AG04450 (cell line): ENCODE measurements at regions of chr4 and their contacts with region 1.

Region 1: DNA sequence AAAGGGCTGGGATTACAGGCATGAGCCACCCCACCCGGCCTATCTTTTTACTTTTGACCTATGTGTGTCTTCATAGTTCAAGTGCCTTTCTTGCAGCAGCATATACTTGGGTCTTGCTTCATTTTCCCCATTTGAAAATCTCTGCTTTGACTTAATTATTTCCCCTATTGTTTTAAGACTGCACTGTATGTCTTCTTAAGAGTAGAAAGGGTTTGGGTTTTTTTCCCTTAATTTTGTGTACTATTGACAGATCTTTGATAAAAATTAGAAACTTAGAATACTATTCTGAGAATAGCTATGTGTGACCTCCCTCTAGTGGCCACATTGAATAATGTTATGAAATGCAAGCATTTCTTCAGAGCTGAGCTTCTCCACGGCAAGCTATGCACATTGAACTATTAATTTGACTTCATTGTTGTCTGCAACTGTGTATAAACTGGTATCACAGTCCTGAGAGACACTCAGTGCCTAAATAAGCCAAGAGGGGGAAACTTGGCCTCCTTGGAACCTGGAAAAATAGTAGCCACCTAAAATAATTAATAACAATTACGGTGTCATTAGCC is 8.7 kb upstream of the SLC25A4 start:
- DNase-seq: peak; percentile 30
- H3K4me3 ChIP-seq: no peak overlapping the region
- H3K27ac ChIP-seq: no peak overlapping the region
- H3K27me3 ChIP-seq: peaks cover 3% of the 10 kb centered on the region
- CTCF ChIP-seq: peak; percentile 63

Region 2: DNA sequence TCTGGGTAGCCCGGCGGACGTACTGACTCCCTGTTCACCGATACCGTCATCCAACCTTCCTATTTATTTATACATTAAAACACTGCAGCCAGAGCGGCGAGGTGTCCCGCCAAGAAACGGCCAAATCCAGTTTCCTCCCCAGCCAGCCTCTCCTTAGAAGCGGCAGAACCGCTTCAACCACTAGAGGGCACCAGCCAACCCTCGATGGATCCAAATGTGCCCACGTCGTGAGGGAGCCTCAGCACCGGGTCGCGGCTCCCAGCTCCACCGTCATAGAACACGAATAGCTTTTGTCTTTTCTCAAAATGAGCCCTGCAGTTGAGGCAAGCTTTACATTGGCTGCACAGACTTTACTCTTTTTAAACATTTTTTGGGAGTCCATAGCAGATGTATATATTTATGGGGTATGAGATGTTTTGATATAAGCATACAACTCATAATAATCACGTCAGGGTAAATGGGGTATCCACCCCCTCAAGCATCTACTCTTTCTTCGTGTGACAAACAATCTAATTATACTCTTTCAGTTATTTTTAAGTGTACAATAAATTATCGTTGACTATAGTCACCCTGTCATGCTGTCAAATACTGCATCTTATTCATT is 129.1 kb before region 1 on chr4:
- CTCF ChIA-PET with region 1: interaction called, 16 read pairs
- POLR2A ChIA-PET with region 1: no interaction called
- DNase-seq: peak; percentile 36
- H3K4me3 ChIP-seq: peak overlapping the region; percentile 39; the same call in 1 of the 2 replicates
- H3K27ac ChIP-seq: no peak overlapping the region
- H3K27me3 ChIP-seq: peaks cover 14% of the 10 kb centered on the region
- CTCF ChIP-seq: peak; percentile 96

Region 3: DNA sequence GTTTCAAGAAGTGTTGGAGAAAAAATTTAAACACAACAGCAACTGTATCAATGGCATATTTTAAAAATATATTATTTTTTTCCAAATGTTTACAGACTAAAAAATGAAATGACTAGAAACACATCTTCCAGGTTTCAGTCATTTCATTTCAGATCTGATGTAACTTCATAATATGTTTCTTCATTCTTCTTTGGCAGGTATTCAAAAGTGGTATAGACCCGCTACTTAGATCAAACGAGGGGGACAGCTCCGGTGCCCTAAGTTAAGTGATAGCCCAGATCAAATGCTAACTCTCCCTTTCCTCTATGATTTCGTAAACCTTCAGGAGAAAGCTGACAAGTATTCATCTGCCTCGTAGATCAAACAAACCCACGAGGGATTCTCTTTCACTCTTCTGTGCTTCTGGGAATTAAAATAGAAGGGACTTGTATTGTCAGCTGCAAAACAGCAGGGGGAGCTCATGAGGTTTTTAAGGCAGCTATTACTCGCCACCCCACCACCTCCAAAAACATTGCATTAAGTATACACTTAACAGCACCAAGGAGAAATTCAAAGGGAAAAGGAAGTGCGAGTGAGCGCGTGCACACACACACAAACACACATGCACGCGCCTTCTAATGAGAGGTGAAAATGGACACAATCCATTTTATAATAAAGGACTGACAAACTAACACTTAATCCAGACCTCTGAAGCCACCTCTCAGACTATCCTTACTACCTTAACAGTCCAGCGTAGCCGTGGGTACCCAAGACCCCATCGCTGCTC is 94.7 kb before region 1 on chr4:
- CTCF ChIA-PET with region 1: interaction called, 137 read pairs
- POLR2A ChIA-PET with region 1: no interaction called
- DNase-seq: peak; percentile 37
- H3K4me3 ChIP-seq: peak overlapping the region; percentile 38
- H3K27ac ChIP-seq: no peak overlapping the region
- H3K27me3 ChIP-seq: peaks cover 7% of the 10 kb centered on the region
- CTCF ChIP-seq: peak; percentile 90

Region 4: DNA sequence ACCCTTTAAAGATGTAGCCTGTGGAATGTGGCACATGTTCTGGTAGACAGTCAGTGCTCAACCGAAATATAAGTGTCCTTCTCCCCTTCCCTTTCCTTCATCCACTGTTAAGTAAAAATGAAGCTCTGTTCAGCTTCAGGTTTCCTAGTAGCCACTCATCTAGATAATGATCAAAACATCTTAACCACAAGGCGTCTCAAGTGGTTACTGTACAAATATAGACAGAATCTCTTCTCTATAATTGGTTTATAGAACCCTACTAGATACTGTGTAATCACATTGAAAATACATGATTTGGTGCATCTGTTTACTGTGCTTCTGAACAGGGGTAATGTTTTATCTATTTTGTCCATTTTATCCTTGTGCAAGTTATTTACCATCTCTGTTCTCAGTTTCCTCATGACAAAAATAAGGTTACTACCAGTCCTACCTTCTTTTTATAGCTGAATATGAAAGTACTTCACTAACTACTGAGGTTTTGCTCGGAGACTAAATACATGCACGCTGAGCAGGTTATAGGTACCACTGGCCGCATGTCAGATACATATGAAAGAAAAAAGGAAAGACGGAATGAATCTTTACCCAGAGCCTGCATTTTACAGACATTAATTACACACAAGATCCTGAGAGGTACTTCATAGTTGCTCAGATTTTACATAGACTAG is 11.6 kb before region 1 on chr4:
- CTCF ChIA-PET with region 1: interaction called, 11 read pairs
- POLR2A ChIA-PET with region 1: no interaction called
- DNase-seq: no peak
- H3K4me3 ChIP-seq: no peak overlapping the region
- H3K27ac ChIP-seq: no peak overlapping the region
- H3K27me3 ChIP-seq: peaks cover 5% of the 10 kb centered on the region
- CTCF ChIP-seq: no peak